Posterior cingulate gyrus (tissue), 11 donors: ENCODE measurements at regions of chr1 and their contacts with region 1.

Region 1: DNA sequence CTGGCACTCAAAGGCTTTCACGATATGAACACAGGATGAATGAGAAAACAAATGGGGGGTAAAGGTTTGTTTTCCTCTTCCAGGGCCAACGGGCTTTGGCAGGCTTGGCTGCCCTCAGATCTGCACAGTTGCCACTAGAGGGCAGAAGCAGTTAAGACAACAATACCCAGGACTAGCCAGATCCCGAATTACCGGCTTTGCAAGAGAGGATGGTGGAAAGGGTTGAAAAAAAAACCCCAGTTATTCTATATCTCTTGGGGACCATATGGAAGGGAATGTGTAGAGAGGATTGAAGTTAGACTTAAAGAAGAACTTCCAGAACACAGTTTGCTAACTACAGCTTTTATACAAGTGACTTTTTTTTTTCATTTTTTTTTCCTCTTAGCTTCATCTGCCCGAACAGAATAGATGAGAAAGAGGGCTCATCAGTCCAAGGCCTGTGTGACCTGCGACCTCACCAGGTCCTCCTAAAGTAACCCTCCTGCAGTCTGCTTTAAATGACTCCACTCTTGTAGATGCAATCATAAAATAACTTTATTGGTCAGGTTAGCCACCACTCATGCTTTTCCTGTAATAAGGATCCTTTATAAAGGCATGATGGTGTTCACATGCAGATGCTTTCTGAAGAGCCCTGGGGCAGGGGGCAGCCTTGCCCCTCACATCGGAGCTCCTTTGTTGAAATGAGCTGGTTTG is 10.7 kb downstream of the FMOD start:
- DNase-seq: peak; percentile 39 to 95 (median 72)

Region 2: GRCh38 chr1:203440771-203441170 is 100.5 kb after region 1 on chr1:
- intact Hi-C with region 1: loop called (anchors 1 kb)
- DNase-seq: peak; percentile 43 to 96 (median 74)

Region 3: GRCh38 chr1:203486618-203487370 is 146.5 kb after region 1 on chr1:
- intact Hi-C with region 1: loop called (anchors 1 kb)
- DNase-seq: peak in 1 of 10 donors; percentile 54